Cardiac septum (tissue), 1 donor: ENCODE measurements at regions of chr11 and their contacts with region 1.

Region 1: GRCh38 chr11:110801328-110801727 is 89.1 kb upstream of the ARHGAP20 start:
- DNase-seq: no peak

Region 2: GRCh38 chr11:110766316-110766715 is 35.0 kb before region 1 on chr11:
- intact Hi-C with region 1: loop called (anchors 5 kb)
- DNase-seq: no peak

Region 3: GRCh38 chr11:110782616-110783015 is 18.7 kb before region 1 on chr11:
- intact Hi-C with region 1: no loop called
- DNase-seq: no peak